ENCODE measurements at regions of chr13 and their contacts with region 1.

Region 1: DNA sequence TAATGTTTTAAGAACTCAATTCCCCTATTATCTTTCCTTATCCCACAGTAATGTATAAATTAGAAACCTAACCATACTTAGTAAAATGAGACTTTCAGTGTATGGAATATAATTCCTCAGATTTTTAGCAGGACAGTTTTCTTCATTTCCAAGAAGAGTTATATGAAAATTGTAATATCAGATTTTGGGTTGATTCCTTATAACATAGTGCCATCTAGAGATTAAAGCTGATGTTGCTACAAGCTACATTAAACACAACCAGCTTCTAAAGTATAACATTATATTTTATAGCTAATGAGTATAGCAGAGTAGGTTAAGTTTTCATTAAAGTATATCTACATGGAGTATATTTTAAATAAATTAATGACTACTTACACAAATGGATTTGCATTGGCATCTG is 99.7 kb upstream of the MIR17HG start:
- H3K4me3 Mint-ChIP-seq: no peak overlapping the region
- H3K27ac Mint-ChIP-seq: no peak overlapping the region
- H3K4me1 Mint-ChIP-seq: peaks cover 19% of the 10 kb centered on the region
- H3K27me3 Mint-ChIP-seq: no peaks in the 10 kb centered on the region

Region 2: DNA sequence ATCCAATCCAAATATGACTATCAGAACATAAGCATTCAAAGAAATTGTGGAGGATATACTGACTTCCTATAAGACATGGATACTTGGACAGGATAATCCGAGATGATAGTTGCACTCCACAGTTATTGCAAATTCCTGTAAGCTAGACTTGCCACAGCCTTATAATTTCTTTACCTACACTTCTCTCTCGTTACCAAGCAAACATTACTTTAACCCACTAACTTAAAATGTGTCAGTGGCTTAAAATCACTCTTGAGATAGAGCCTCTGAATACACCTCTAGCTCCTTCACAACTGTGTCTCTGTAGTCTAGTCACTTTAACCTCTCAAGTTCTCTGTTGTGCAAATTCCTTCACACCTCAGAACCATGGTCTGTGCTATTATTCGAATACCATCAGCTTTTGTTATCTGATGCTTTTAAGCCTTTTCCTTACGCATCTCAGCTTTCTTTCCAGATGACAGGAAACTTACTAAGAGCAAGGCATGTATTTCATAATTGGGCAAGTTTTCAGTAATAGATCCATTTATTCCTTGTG is 375.2 kb before region 1 on chr13:
- intact Hi-C with region 1: loop called (anchors 10 kb)
- H3K4me3 Mint-ChIP-seq: no peak overlapping the region
- H3K27ac Mint-ChIP-seq: no peak overlapping the region
- H3K4me1 Mint-ChIP-seq: peaks cover 1% of the 10 kb centered on the region
- H3K27me3 Mint-ChIP-seq: no peaks in the 10 kb centered on the region

Region 3: DNA sequence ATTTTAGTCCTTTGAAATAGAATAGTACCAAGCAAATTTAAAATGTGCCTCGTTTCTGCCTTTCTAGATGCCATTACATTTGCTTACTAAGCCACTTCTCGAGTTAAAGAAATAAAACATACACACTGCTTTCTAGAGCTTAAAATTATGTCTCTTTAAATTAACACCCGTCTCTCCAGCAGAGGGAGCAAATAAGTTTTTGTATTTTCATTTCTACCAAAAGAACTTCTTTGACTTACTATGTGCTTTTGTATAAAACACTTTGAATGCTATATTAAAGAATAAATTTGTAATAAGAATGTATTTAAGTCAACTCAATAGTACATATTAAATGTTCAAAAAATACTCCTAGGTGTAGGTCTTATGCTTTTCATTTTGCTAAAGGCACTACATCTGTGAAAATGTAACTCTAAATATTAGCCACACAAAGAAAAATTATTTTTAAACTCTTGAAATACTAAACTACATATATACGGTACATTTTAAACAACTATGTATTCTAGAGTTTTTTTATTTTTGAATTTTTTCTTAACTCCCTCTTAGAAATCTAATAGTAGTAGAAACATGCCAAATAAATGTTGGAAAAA is 169.6 kb before region 1 on chr13:
- intact Hi-C with region 1: loop called (anchors 5 kb)
- H3K4me3 Mint-ChIP-seq: no peak overlapping the region
- H3K27ac Mint-ChIP-seq: no peak overlapping the region
- H3K4me1 Mint-ChIP-seq: no peaks in the 10 kb centered on the region
- H3K27me3 Mint-ChIP-seq: no peaks in the 10 kb centered on the region

Region 4: GRCh38 chr13:91291078-91291477 is 43.3 kb after region 1 on chr13:
- intact Hi-C with region 1: no loop called
- H3K4me3 Mint-ChIP-seq: no peak overlapping the region
- H3K27ac Mint-ChIP-seq: no peak overlapping the region
- H3K4me1 Mint-ChIP-seq: no peaks in the 10 kb centered on the region
- H3K27me3 Mint-ChIP-seq: no peaks in the 10 kb centered on the region

Measured in dendritic cell treated with granulocyte-macrophage colony-stimulating factor and Interleukin-4, amounts not matched to agents 40 ng/mL and 50 ng/mL, for 4 days (primary cell).